Naive thymus-derived CD4-positive, alpha-beta T cell (primary cell): ENCODE measurements at regions of chr10 and their contacts with region 1.

Region 1: DNA sequence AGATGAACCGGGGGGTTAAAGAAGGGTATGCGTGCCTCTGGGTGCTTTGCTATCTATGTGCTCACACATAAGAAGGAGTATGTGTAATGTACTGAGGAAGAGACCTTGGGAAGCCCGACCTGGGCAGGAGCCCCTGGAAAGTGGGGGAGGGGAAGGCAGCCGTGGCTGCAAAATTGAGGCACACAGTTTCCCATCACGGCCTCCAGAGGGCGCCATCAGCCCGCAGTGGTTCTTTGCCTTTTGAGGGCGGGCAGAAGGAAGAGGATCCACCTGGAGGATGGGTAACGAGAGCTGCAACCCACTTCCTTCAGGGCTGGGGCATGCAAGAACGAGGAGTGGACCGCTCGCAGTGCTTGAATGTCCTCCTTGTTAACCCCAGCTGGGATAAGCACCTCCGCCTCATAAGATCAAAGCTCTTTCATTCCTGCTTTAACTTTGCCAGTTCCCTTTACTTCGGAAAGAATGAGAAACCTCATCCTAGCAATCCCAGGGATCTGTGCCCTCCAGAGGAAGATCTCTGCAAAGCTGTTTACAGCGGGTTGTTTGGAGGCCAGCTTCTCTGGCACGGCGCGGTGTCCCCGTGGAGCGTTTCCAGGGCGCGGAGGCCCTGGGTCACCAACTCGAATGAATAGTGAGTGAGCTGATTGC is 77.9 kb downstream of the PCGF5 start:
- DNase-seq: peak; percentile 63 to 84 (median 77)
- ATAC-seq: peak; percentile 96
- H3K4me3 ChIP-seq: peak overlapping the region; percentile 53
- H3K4me3 Mint-ChIP-seq: peak overlapping the region; percentile 67 to 83 (median 74)
- H3K27ac ChIP-seq: no peak overlapping the region
- H3K27ac Mint-ChIP-seq: peak overlapping the region in 4 of 9 donors; percentile 7 to 74 (median 42)
- H3K4me1 ChIP-seq: peaks cover 0 to 4% of the 10 kb centered on the region in 2 donors
- H3K4me1 Mint-ChIP-seq: peaks cover 4 to 11% (median 10%) of the 10 kb centered on the region in 7 donors
- H3K27me3 ChIP-seq: no peaks in the 10 kb centered on the region
- H3K27me3 Mint-ChIP-seq: peaks cover 6 to 16% (median 10%) of the 10 kb centered on the region in 5 donors

Region 2: GRCh38 chr10:90930070-90930837 is 368.1 kb before region 1 on chr10:
- CTCF ChIA-PET with region 1: no interaction called
- POLR2A ChIA-PET with region 1: no interaction called
- intact Hi-C with region 1: no loop called
- DNase-seq: no peak
- ATAC-seq: no peak
- H3K4me3 ChIP-seq: no peak overlapping the region
- H3K4me3 Mint-ChIP-seq: no peak overlapping the region
- H3K27ac ChIP-seq: no peak overlapping the region
- H3K27ac Mint-ChIP-seq: no peak overlapping the region
- H3K4me1 ChIP-seq: no peaks in the 10 kb centered on the region
- H3K4me1 Mint-ChIP-seq: peaks cover 0 to 3% (median 0%) of the 10 kb centered on the region in 7 donors
- H3K27me3 ChIP-seq: no peaks in the 10 kb centered on the region
- H3K27me3 Mint-ChIP-seq: peaks cover 0 to 48% (median 24%) of the 10 kb centered on the region in 5 donors

Region 3: DNA sequence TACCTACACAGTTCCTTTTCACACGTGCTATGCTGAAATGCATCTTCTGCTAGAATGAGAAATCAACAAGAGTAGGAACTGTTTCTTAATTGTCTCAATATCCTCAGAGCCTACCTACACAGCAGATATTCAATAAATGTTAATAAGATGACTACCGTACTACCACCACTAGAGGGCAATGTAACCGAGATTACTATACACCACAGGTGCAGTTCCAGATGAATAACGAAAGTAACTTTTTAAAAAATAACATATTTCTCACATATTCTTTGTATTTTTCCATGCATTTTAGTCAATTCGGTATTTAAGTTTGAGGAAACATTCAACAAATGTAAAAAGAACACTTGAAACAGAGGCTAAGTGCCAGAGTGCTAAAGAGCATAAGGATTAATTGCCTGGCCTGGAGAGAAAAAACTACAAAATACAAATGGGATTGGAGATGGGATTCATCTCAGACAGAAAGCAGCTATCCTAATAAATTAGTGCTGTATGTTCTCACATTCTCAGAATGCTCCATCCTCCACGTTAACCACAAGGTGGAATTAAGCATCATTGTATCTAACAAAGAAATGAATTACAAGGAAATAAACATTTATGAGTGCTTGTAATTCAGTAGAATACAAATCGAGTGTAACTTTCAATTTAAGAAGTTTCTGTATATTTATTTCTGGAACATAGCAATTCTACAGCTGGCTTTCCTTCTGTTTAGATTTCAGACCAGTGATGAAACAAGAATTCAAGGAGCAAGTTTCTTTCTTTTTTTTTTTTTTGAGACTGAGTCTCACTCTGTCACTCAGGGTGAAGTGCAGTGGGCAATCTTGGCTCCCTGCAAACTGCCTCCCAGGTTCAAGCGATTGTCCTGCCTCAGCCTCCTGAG is 91.5 kb after region 1 on chr10:
- CTCF ChIA-PET with region 1: interaction called, 7 read pairs
- POLR2A ChIA-PET with region 1: no interaction called
- intact Hi-C with region 1: loop called (anchors 1 to 5 kb)
- DNase-seq: peak in 7 of 9 donors; percentile 51 to 76 (median 68)
- ATAC-seq: peak; percentile 98
- H3K4me3 ChIP-seq: no peak overlapping the region
- H3K4me3 Mint-ChIP-seq: peak overlapping the region in 6 of 10 donors; percentile 4 to 67 (median 38)
- H3K27ac ChIP-seq: no peak overlapping the region
- H3K27ac Mint-ChIP-seq: peak overlapping the region in 1 of 9 donors; percentile 30
- H3K4me1 ChIP-seq: no peaks in the 10 kb centered on the region
- H3K4me1 Mint-ChIP-seq: peaks cover 0 to 11% (median 6%) of the 10 kb centered on the region in 7 donors
- H3K27me3 ChIP-seq: no peaks in the 10 kb centered on the region
- H3K27me3 Mint-ChIP-seq: peaks cover 12 to 34% (median 20%) of the 10 kb centered on the region in 5 donors

Region 4: DNA sequence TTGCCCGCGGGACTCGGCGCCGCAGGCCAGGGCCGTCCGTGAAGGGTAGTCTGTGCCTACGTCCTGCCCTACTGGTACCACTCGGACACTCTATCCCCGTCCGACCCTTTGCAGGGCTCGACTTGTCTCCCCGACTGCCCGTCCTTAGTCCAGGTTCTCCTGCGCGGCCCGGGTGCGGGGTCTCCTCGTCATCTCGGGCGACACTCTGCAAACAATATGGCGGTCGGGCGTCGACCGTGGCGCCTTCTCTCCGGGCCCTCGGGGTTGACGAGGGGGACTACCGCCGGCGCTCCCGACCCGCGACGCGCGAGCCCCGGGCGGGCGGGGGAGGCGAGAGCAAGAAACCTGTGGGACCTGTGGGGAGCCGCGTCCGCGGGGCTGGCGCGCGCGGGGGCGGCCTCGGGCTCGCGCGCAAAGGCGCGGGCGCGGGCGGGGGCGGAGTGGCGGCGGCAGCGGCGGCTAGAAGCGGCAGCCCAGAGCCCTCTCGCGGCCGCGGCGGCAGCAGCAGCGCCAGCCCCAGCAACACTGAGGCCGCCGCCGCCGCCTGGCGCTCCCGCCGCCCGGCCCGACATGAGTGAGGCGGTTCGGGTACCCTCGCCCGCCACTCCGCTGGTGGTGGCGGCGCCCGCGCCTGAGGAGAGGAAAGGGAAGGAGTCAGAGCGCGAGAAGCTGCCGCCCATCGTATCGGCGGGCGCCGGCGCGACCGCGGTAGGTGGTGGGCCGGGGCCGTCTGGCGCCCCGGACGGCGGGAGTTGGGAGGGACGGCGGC is 111.7 kb after region 1 on chr10 and contains the start of gene HECTD2:
- CTCF ChIA-PET with region 1: interaction called, 5 read pairs
- POLR2A ChIA-PET with region 1: interaction called, 8 read pairs
- intact Hi-C with region 1: loop called (anchors 1 kb)
- DNase-seq: peak; percentile 76 to 89 (median 86)
- ATAC-seq: peak; percentile 93
- H3K4me3 ChIP-seq: peak within 1 kb of the TSS; percentile 83
- H3K4me3 Mint-ChIP-seq: peak within 1 kb of the TSS; percentile 75 to 93 (median 90)
- H3K27ac ChIP-seq: peak within 1 kb of the TSS; percentile 88
- H3K27ac Mint-ChIP-seq: peak within 1 kb of the TSS; percentile 81 to 96 (median 91)
- H3K4me1 ChIP-seq: peaks cover 8 to 17% of the 10 kb centered on the region in 2 donors
- H3K4me1 Mint-ChIP-seq: peaks cover 8 to 18% (median 13%) of the 10 kb centered on the region in 7 donors
- H3K27me3 ChIP-seq: no peaks in the 10 kb centered on the region
- H3K27me3 Mint-ChIP-seq: peaks cover 0 to 27% (median 0%) of the 10 kb centered on the region in 5 donors
- total RNA-seq, gene HECTD2: 1.1 to 4.6 (median 2.0) TPM

Region 5: GRCh38 chr10:91551856-91552255 is 253.5 kb after region 1 on chr10:
- CTCF ChIA-PET with region 1: no interaction called
- POLR2A ChIA-PET with region 1: no interaction called
- intact Hi-C with region 1: loop called in 1 of 2 experiments (anchors 10 kb)
- DNase-seq: no peak
- ATAC-seq: no peak
- H3K4me3 ChIP-seq: no peak overlapping the region
- H3K4me3 Mint-ChIP-seq: no peak overlapping the region
- H3K27ac ChIP-seq: no peak overlapping the region
- H3K27ac Mint-ChIP-seq: no peak overlapping the region
- H3K4me1 ChIP-seq: no peaks in the 10 kb centered on the region
- H3K4me1 Mint-ChIP-seq: peaks cover 0 to 2% (median 0%) of the 10 kb centered on the region in 7 donors
- H3K27me3 ChIP-seq: no peaks in the 10 kb centered on the region
- H3K27me3 Mint-ChIP-seq: peaks cover 0 to 3% (median 0%) of the 10 kb centered on the region in 5 donors

Region 6: DNA sequence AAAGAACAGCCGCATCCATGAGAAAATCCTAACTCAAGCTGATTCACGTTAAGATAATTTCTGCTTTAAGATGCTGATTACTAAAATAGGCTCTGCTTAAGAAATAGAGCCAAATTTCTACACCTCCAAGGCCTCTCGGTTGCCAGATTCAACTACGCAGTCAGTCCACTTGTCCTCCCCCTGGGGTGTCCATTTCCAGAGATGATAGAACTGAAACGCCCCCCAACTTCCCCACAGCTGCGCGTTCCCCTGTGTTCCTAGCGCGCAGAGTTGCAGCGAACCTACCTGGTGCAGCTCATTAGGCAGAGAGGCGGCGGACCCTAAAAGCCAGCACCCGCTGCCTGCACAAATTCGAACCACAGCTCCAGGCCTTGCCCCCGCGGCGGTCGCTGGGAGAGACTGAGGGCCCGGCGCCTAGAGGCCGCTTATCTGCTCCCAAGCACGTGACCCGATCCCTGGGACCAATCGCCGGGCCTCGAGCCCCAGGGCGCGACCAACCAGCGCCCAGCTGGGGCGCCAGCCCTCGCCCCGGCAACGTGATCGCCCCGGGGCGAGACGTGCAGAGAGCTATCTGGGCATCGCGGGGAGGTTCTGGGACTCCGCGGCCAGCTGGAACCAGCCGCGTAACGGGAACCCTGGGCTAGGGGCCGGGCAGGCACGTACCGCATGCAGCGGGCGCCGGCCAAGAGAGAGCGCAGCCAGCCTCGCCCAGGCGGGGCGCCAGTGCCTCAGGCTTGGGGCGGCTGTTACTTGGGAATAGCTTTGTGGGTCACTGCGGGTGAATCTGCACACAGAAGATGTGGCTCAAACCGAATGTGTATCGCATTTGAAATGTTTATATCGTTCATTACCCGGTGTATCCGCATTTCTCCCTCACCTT is 334.6 kb after region 1 on chr10 and contains the start of gene PPP1R3C:
- CTCF ChIA-PET with region 1: interaction called, 68 read pairs
- POLR2A ChIA-PET with region 1: interaction called, 5 read pairs
- intact Hi-C with region 1: loop called in 1 of 2 experiments (anchors 1 kb)
- DNase-seq: peak; percentile 5 to 60 (median 17)
- ATAC-seq: peak; percentile 65
- H3K4me3 ChIP-seq: peak within 1 kb of the TSS; percentile 33
- H3K4me3 Mint-ChIP-seq: peak within 1 kb of the TSS; percentile 68 to 76 (median 73)
- H3K27ac ChIP-seq: no peak within 1 kb of the TSS
- H3K27ac Mint-ChIP-seq: peak within 1 kb of the TSS in 1 of 9 donors; percentile 7
- H3K4me1 ChIP-seq: peaks cover 0 to 5% of the 10 kb centered on the region in 2 donors
- H3K4me1 Mint-ChIP-seq: peaks cover 0 to 15% (median 7%) of the 10 kb centered on the region in 7 donors
- H3K27me3 ChIP-seq: peaks cover 0 to 14% of the 10 kb centered on the region in 2 donors
- H3K27me3 Mint-ChIP-seq: peaks cover 61 to 74% (median 64%) of the 10 kb centered on the region in 5 donors
- total RNA-seq, gene PPP1R3C: 0.15 TPM in 1 of 5 experiments, not detected in the others

Region 7: DNA sequence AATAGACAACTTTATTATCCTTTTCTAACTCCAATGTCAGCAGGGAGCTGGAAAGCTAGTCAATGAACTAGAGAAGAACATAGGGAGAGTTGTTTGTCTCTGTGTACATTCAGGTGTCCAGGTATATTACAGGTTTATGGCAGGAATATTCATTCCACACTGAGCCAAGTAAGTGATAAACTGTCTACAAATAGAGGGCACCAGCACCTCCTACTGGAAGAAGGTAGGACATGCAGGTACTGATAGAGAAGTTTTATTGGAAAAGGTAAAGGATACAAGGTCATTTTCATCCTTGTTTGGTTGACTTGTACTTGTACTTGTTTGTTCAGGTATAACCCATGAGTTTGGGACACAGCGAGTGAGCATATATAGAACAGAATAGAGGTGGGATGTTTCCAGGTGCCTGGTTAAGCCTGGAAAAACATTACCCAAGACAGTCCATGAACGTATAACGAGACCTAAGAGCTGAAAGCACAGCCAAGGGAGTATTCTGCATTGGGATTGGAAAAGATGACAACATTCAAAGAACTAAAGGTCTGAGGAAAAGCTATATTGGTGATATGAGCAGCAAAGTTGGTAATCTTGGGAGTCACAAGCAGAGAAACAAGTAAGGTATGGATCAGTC is 395.9 kb after region 1 on chr10:
- CTCF ChIA-PET with region 1: no interaction called
- POLR2A ChIA-PET with region 1: no interaction called
- intact Hi-C with region 1: loop called (anchors 1 kb)
- DNase-seq: peak in 4 of 9 donors; percentile 4 to 17 (median 12)
- ATAC-seq: no peak
- H3K4me3 ChIP-seq: no peak overlapping the region
- H3K4me3 Mint-ChIP-seq: no peak overlapping the region
- H3K27ac ChIP-seq: no peak overlapping the region
- H3K27ac Mint-ChIP-seq: no peak overlapping the region
- H3K4me1 ChIP-seq: no peaks in the 10 kb centered on the region
- H3K4me1 Mint-ChIP-seq: peaks cover 0 to 5% (median 0%) of the 10 kb centered on the region in 7 donors
- H3K27me3 ChIP-seq: no peaks in the 10 kb centered on the region
- H3K27me3 Mint-ChIP-seq: peaks cover 0 to 8% (median 4%) of the 10 kb centered on the region in 5 donors